Common myeloid progenitor, CD34-positive (primary cell): ENCODE measurements at regions of chr1 and their contacts with region 1.

Region 1: DNA sequence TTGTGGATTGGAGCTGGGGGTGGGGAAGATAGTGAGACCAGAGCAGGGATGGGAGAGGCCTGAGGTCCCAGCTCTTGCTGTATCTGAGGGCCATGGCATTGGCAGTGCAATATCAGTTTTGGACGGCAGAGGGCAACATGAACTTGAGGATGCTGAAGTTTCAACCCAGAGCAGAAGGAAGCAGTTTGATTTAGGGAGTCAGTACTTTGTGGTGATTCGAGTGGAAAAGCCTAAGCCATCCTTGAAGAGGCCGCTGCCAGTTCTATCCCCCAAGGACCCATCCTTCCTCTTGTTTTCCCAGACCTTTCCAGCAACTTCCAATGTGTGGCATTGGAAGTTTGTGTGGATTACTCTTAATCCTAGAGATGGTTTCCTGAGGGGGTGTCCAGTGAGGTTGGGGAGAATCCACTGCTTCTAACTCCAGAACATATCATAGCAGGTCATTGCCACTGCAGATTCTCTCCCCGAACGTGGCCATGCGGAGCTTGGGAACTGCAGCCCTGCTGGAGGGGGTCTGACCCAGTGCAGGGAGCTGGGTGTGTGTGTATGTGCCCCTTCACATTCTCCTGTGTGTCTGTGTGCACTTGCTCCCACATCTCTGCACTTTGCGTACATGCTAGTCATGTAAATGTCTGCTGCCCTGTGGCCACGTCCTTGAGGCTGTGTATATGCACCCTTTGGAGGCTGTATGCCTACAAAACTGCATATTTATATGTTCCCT is 24.1 kb downstream of the SLC26A9 start:
- DNase-seq: peak; percentile 68 to 82 (median 74)
- H3K4me3 ChIP-seq: no peak overlapping the region
- H3K27ac ChIP-seq: no peak overlapping the region
- H3K4me1 ChIP-seq: peaks cover 0 to 12% (median 6%) of the 10 kb centered on the region in 4 experiments
- H3K27me3 ChIP-seq: no peaks in the 10 kb centered on the region

Region 2: DNA sequence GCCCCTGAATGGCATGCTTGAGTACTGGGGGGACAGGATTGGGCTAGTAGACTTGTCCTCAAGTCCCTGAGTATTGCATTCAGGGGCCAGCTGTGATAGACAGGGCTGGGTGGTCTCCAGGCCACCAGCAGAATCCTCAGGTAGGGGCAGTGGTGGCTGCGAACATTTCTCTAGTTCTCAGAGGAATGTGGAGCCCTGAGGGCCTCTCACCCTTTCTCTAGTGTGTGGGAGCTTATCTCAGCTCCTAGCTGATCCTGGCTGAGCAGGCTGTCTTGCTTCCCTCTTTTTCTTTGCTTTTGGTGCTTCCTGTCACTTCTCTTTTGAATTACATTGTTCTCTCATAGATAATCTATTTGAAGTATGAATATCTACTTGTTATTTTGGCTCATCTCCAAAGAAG is 39.2 kb before region 1 on chr1:
- CTCF ChIA-PET with region 1: no interaction called
- POLR2A ChIA-PET with region 1: no interaction called
- DNase-seq: no peak
- H3K4me3 ChIP-seq: no peak overlapping the region
- H3K27ac ChIP-seq: no peak overlapping the region
- H3K4me1 ChIP-seq: no peaks in the 10 kb centered on the region
- H3K27me3 ChIP-seq: peaks cover 0 to 21% (median 3%) of the 10 kb centered on the region in 5 experiments

Region 3: GRCh38 chr1:205907794-205908193 is 11.4 kb before region 1 on chr1:
- CTCF ChIA-PET with region 1: interaction called, 14 read pairs
- POLR2A ChIA-PET with region 1: no interaction called
- DNase-seq: no peak
- H3K4me3 ChIP-seq: no peak overlapping the region
- H3K27ac ChIP-seq: no peak overlapping the region
- H3K4me1 ChIP-seq: no peaks in the 10 kb centered on the region
- H3K27me3 ChIP-seq: peaks cover 0 to 8% (median 0%) of the 10 kb centered on the region in 5 experiments

Region 4: GRCh38 chr1:205947002-205947623 is 27.9 kb after region 1 on chr1:
- CTCF ChIA-PET with region 1: interaction called, 10 read pairs
- POLR2A ChIA-PET with region 1: no interaction called
- DNase-seq: no peak
- H3K4me3 ChIP-seq: no peak overlapping the region
- H3K27ac ChIP-seq: no peak overlapping the region
- H3K4me1 ChIP-seq: peaks cover 0 to 10% (median 4%) of the 10 kb centered on the region in 4 experiments
- H3K27me3 ChIP-seq: peaks cover 0 to 12% (median 0%) of the 10 kb centered on the region in 5 experiments

Region 5: DNA sequence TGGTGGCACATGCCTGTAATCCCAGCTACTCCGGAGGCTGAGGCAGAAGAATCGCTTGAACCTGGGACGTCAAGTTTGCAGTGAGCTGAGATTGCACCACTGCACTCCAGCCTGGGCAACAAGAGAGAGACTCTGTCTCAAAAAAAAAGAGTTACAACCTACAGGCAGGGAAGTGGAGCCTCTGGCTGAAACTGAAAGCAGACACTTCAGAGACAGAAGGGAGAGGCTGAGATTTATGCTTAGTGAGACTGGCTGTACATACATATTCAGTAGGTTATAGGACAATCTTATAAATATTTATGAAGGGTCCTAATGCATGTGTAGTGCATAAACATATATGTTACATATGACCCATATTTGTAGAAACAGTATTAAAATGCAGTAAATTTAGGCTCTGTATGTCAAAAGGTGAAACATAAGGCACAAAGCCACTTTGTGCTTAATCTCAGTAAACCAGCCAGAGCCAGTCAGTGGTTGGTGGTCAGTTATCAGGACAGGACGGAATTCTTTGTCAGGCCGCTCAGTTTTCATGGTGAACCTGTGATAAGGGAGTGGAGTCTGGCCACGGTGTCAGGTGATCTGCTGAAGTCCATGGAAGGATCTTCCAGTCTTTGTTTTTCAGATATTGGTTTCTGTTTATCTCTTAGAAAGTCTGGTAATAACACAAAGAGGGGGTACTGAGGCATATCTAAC is 147.4 kb after region 1 on chr1:
- CTCF ChIA-PET with region 1: no interaction called
- POLR2A ChIA-PET with region 1: no interaction called
- DNase-seq: peak in 2 of 3 donors; percentile 49 to 60
- H3K4me3 ChIP-seq: no peak overlapping the region
- H3K27ac ChIP-seq: no peak overlapping the region
- H3K4me1 ChIP-seq: peaks cover 4 to 39% (median 31%) of the 10 kb centered on the region in 4 experiments
- H3K27me3 ChIP-seq: no peaks in the 10 kb centered on the region